ENCODE measurements at regions of chr7 and their contacts with region 1.

Region 1: GRCh38 chr7:1664711-1665548 is 5.1 kb upstream of the ELFN1 start:
- DNase-seq: peak; percentile 88
- ATAC-seq: peak; percentile 8
- H3K4me3 Mint-ChIP-seq: peak overlapping the region; percentile 45
- H3K27ac Mint-ChIP-seq: no peak overlapping the region
- H3K4me1 Mint-ChIP-seq: peaks cover 12% of the 10 kb centered on the region
- H3K27me3 Mint-ChIP-seq: peaks cover 75% of the 10 kb centered on the region
- CTCF ChIP-seq: peak; percentile 72

Region 2: DNA sequence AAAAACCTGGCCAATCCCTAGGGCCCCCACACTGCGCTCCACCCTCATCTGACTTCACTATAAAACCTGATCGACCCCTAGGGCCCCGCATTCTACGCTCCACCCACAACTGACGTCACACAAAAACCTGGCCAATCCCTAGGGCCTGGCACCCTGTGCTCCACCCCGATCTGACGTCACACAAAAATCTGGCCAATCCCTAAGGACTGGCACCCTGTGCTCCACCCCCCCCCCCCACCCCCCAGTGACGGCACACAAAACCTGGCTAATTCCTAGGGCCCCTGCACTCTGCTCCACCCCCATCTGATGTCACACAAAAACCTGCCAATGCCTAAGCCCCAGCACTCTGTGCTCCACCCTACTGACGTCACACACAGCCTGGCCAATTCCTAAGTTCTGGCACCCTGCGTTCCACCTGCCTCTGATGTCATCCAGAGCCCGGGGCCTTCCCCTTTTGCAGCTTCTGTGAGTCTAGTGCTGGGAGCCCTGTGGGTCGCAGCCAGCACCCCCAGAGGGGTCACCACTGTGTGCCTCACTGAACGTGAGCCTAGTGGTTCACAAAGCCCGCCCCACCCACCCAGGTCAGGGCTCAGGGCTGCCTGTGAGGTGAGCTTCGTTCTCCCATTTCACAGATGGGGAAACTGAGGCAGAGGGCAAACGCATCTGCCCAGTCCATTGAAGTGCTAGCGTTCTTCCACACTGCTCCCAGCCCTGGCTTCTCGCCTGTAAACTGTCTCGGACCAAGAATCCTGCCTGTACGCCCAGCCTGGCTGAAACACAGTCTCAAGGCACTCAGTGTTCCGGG is 246.2 kb before region 1 on chr7:
- CTCF ChIA-PET with region 1: no interaction called
- POLR2A ChIA-PET with region 1: no interaction called
- DNase-seq: peak; percentile 79
- ATAC-seq: peak; percentile 74
- H3K4me3 Mint-ChIP-seq: no peak overlapping the region
- H3K27ac Mint-ChIP-seq: peak overlapping the region; percentile 41
- H3K4me1 Mint-ChIP-seq: peaks cover 12% of the 10 kb centered on the region
- H3K27me3 Mint-ChIP-seq: peaks cover 4% of the 10 kb centered on the region
- CTCF ChIP-seq: no peak

Region 3: GRCh38 chr7:1638215-1638661 is 26.7 kb before region 1 on chr7:
- CTCF ChIA-PET with region 1: interaction called, 12 read pairs
- POLR2A ChIA-PET with region 1: interaction called, 4 read pairs
- DNase-seq: no peak
- ATAC-seq: peak; percentile 47
- H3K4me3 Mint-ChIP-seq: no peak overlapping the region
- H3K27ac Mint-ChIP-seq: no peak overlapping the region
- H3K4me1 Mint-ChIP-seq: no peaks in the 10 kb centered on the region
- H3K27me3 Mint-ChIP-seq: no peaks in the 10 kb centered on the region; the same call in 1 of the 2 replicates
- CTCF ChIP-seq: no peak

Region 4: GRCh38 chr7:1646957-1647891 is 17.7 kb before region 1 on chr7:
- CTCF ChIA-PET with region 1: interaction called, 14 read pairs
- POLR2A ChIA-PET with region 1: no interaction called
- DNase-seq: no peak
- ATAC-seq: no peak
- H3K4me3 Mint-ChIP-seq: no peak overlapping the region
- H3K27ac Mint-ChIP-seq: no peak overlapping the region
- H3K4me1 Mint-ChIP-seq: no peaks in the 10 kb centered on the region
- H3K27me3 Mint-ChIP-seq: no peaks in the 10 kb centered on the region; the same call in 1 of the 2 replicates
- CTCF ChIP-seq: no peak

Region 5: DNA sequence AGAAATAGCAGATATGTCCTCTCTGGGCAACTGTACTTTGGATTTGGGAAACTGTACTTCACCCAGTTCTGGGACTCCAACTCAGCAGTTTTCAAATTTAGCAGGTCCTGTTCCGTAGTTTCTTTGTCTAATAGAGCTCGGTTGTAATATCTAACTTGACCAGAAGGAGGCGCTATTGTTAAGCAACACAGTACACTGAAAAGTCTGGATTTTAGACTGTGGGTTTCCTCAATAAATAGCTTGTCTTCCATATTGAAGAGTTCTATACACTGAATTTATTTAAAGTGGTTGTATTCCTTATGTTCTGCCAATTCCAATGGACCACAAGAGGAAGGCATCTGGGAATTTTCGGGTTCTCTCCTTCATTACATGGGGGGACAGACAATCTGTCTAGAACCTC is 45.0 kb after region 1 on chr7:
- CTCF ChIA-PET with region 1: interaction called, 11 read pairs
- POLR2A ChIA-PET with region 1: no interaction called
- DNase-seq: no peak
- ATAC-seq: no peak
- H3K4me3 Mint-ChIP-seq: no peak overlapping the region
- H3K27ac Mint-ChIP-seq: no peak overlapping the region
- H3K4me1 Mint-ChIP-seq: peaks cover 38% of the 10 kb centered on the region
- H3K27me3 Mint-ChIP-seq: peaks cover 4% of the 10 kb centered on the region
- CTCF ChIP-seq: peak; percentile 68

Region 6: GRCh38 chr7:1758028-1758858 is 93.3 kb after region 1 on chr7:
- CTCF ChIA-PET with region 1: interaction called, 21 read pairs
- POLR2A ChIA-PET with region 1: no interaction called
- DNase-seq: peak; percentile 49
- ATAC-seq: peak; percentile 72
- H3K4me3 Mint-ChIP-seq: no peak overlapping the region
- H3K27ac Mint-ChIP-seq: no peak overlapping the region
- H3K4me1 Mint-ChIP-seq: peaks cover 18% of the 10 kb centered on the region
- H3K27me3 Mint-ChIP-seq: peaks cover 23% of the 10 kb centered on the region
- CTCF ChIP-seq: peak; percentile 24; the same call in 1 of the 2 replicates

Region 7: GRCh38 chr7:1767524-1767923 is 102.6 kb after region 1 on chr7:
- CTCF ChIA-PET with region 1: interaction called, 18 read pairs
- POLR2A ChIA-PET with region 1: no interaction called
- DNase-seq: peak; percentile 61
- ATAC-seq: peak; percentile 62; the same call in 1 of the 2 replicates
- H3K4me3 Mint-ChIP-seq: no peak overlapping the region
- H3K27ac Mint-ChIP-seq: no peak overlapping the region
- H3K4me1 Mint-ChIP-seq: no peaks in the 10 kb centered on the region
- H3K27me3 Mint-ChIP-seq: no peaks in the 10 kb centered on the region
- CTCF ChIP-seq: 0 out of 2 replicates have a peak, but pooled peaks have one; percentile 38

Region 8: GRCh38 chr7:1825897-1826741 is 161.2 kb after region 1 on chr7:
- CTCF ChIA-PET with region 1: no interaction called
- POLR2A ChIA-PET with region 1: no interaction called
- DNase-seq: no peak
- ATAC-seq: no peak
- H3K4me3 Mint-ChIP-seq: no peak overlapping the region
- H3K27ac Mint-ChIP-seq: no peak overlapping the region
- H3K4me1 Mint-ChIP-seq: no peaks in the 10 kb centered on the region
- H3K27me3 Mint-ChIP-seq: no peaks in the 10 kb centered on the region
- CTCF ChIP-seq: no peak